Colonic mucosa (tissue), 4 donors: ENCODE measurements at regions of chr9 and their contacts with region 1.

Region 1: DNA sequence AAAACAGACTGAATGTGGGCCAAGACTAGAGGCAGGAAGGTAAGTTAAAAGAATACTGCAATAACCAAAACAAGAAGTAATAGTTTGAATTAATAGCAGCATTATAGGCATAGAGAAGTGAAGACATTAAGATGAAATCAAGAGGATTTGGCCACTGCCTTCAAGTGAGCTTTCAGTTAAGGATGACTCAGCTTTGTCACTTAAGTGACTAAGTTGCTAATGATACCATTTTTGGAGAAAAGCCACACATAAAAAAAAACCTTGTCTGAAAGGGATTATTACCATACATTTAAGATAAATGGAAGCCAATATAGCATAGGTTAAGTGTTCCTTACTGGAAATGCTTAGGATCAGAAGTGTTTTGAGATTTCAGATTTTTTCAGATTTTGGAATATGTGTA is 57.0 kb downstream of the ECPAS start:
- DNase-seq: no peak
- H3K4me3 ChIP-seq: no peak overlapping the region
- H3K27ac ChIP-seq: no peak overlapping the region
- H3K4me1 ChIP-seq: no peaks in the 10 kb centered on the region
- H3K27me3 ChIP-seq: no peaks in the 10 kb centered on the region
- CTCF ChIP-seq: no peak

Region 2: GRCh38 chr9:111375817-111376564 is 51.2 kb before region 1 on chr9:
- intact Hi-C with region 1: loop called (anchors 10 kb)
- DNase-seq: no peak
- H3K4me3 ChIP-seq: no peak overlapping the region
- H3K27ac ChIP-seq: no peak overlapping the region
- H3K4me1 ChIP-seq: no peaks in the 10 kb centered on the region
- H3K27me3 ChIP-seq: no peaks in the 10 kb centered on the region
- CTCF ChIP-seq: no peak